Left colon (tissue), 2 donors: ENCODE measurements at regions of chr15 and their contacts with region 1.

Region 1: GRCh38 chr15:84598969-84599368 is 1.8 kb upstream of the ZSCAN2 start:
- DNase-seq: peak in 1 of 2 donors; percentile 42
- ATAC-seq: peak; percentile 20

Region 2: GRCh38 chr15:84552896-84553295 is 46.1 kb before region 1 on chr15:
- intact Hi-C with region 1: no loop called
- DNase-seq: no peak
- ATAC-seq: no peak

Region 3: GRCh38 chr15:84658080-84658787 is 59.3 kb after region 1 on chr15 and contains the start of gene NMB:
- intact Hi-C with region 1: loop called in 1 of 2 experiments (anchors 10 kb)
- DNase-seq: peak; percentile 88
- ATAC-seq: peak; percentile 67
- total RNA-seq, gene NMB: 1.8 to 2.8 TPM

Region 4: GRCh38 chr15:84883916-84884768 is 285.2 kb after region 1 on chr15 and contains the start of gene SLC28A1:
- intact Hi-C with region 1: loop called in 1 of 2 experiments (anchors 10 kb)
- DNase-seq: peak in 1 of 2 donors; percentile 12
- ATAC-seq: peak; percentile 69
- total RNA-seq, gene SLC28A1: not detected